ENCODE measurements at regions of chr3 and their contacts with region 1.

Region 1: GRCh38 chr3:171459942-171460724 is at the start of gene TNIK:
- H3K4me3 Mint-ChIP-seq: peak within 1 kb of the TSS; percentile 94
- H3K27ac Mint-ChIP-seq: peak within 1 kb of the TSS; percentile 56
- H3K4me1 Mint-ChIP-seq: peaks cover 40% of the 10 kb centered on the region
- H3K27me3 Mint-ChIP-seq: peaks cover 58% of the 10 kb centered on the region

Region 2: GRCh38 chr3:171347301-171348039 is 112.7 kb before region 1 on chr3:
- intact Hi-C with region 1: loop called (anchors 5 kb)
- H3K4me3 Mint-ChIP-seq: peak overlapping the region; percentile 42
- H3K27ac Mint-ChIP-seq: peak overlapping the region; percentile 94
- H3K4me1 Mint-ChIP-seq: peaks cover 56% of the 10 kb centered on the region
- H3K27me3 Mint-ChIP-seq: no peaks in the 10 kb centered on the region